CD4-positive, alpha-beta memory T cell (primary cell): ENCODE measurements at regions of chr9 and their contacts with region 1.

Region 1: DNA sequence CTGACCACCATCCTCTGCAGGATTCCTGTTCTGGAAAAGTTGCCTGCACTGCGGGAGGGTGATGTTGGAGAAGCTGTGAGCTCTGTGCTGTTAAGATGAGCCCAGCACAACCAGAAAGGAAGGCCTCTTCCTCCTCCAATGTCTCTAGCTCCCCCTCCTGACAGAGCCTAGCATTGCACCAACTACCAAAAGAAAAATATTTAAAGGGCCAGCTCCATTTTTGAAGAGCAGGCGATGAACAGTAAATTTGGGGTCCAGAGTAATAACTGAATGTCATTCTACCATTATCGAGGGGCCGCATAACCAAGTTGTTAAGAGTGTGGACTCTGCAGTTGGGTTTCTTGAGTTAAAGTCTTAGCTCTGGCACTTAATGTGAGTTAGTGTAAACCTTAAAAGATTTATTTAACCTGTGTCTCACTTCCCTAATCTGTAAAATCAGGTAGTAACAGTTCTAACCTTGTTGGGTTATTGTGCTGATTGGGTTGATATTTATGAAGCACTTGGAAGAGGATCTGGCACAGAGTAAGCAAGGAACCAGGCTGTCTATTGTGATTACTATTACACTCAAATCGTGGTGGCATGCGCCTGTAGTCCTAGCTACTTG is 3.9 kb downstream of the TEX53 start:
- DNase-seq: peak; percentile 77 to 86 (median 83)
- H3K4me3 ChIP-seq: no peak overlapping the region
- H3K4me3 Mint-ChIP-seq: no peak overlapping the region
- H3K27ac ChIP-seq: no peak overlapping the region
- H3K27ac Mint-ChIP-seq: peak overlapping the region in 4 of 7 donors; percentile 38 to 75 (median 64)
- H3K4me1 ChIP-seq: peaks cover 12% of the 10 kb centered on the region
- H3K4me1 Mint-ChIP-seq: peaks cover 7 to 18% (median 14%) of the 10 kb centered on the region in 4 donors
- H3K27me3 ChIP-seq: no peaks in the 10 kb centered on the region
- H3K27me3 Mint-ChIP-seq: no peaks in the 10 kb centered on the region

Region 2: GRCh38 chr9:114385412-114386181 is 268.1 kb before region 1 on chr9:
- CTCF ChIA-PET with region 1: interaction called, 33 read pairs
- POLR2A ChIA-PET with region 1: interaction called, 11 read pairs
- intact Hi-C with region 1: no loop called
- DNase-seq: peak; percentile 91 to 98 (median 93)
- H3K4me3 ChIP-seq: peak overlapping the region; percentile 78 to 99
- H3K4me3 Mint-ChIP-seq: peak overlapping the region; percentile 95 to 100 (median 97)
- H3K27ac ChIP-seq: peak overlapping the region; percentile 88
- H3K27ac Mint-ChIP-seq: peak overlapping the region; percentile 96 to 99 (median 97)
- H3K4me1 ChIP-seq: peaks cover 79% of the 10 kb centered on the region
- H3K4me1 Mint-ChIP-seq: peaks cover 44 to 91% (median 66%) of the 10 kb centered on the region in 4 donors
- H3K27me3 ChIP-seq: no peaks in the 10 kb centered on the region
- H3K27me3 Mint-ChIP-seq: no peaks in the 10 kb centered on the region

Region 3: DNA sequence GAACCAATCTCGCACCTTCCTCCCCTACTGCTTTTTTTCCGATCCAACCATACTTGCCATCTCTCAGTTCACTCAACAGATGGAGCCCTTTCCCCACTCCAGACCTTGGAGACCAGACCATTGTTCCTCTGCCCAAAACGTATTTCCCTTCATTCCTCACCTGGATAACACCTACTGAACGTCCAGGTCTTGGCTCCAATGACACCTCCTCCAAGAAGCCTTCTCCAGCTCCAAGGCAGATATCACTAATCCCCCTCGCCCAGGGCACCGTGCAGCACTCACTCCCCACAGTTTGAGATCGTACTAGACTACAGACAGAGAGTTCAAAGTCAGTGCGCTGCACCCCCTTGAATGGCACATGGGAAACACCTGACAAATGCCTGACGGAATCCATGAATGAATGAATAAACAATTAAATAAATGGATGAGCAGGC is 218.8 kb before region 1 on chr9:
- CTCF ChIA-PET with region 1: interaction called, 93 read pairs
- POLR2A ChIA-PET with region 1: interaction called, 4 read pairs
- intact Hi-C with region 1: loop called (anchors 1 kb)
- DNase-seq: peak in 3 of 5 donors; percentile 7 to 16 (median 15)
- H3K4me3 ChIP-seq: no peak overlapping the region
- H3K4me3 Mint-ChIP-seq: no peak overlapping the region
- H3K27ac ChIP-seq: no peak overlapping the region
- H3K27ac Mint-ChIP-seq: no peak overlapping the region
- H3K4me1 ChIP-seq: peaks cover 6% of the 10 kb centered on the region
- H3K4me1 Mint-ChIP-seq: peaks cover 0 to 4% (median 2%) of the 10 kb centered on the region in 4 donors
- H3K27me3 ChIP-seq: no peaks in the 10 kb centered on the region
- H3K27me3 Mint-ChIP-seq: no peaks in the 10 kb centered on the region

Region 4: GRCh38 chr9:114505187-114506081 is 148.2 kb before region 1 on chr9 and contains the start of gene WHRN:
- CTCF ChIA-PET with region 1: interaction called, 28 read pairs
- POLR2A ChIA-PET with region 1: interaction called, 4 read pairs
- intact Hi-C with region 1: loop called (anchors 1 kb)
- DNase-seq: peak; percentile 91 to 95 (median 93)
- H3K4me3 ChIP-seq: peak within 1 kb of the TSS; percentile 62 to 63
- H3K4me3 Mint-ChIP-seq: peak within 1 kb of the TSS; percentile 83 to 90 (median 87)
- H3K27ac ChIP-seq: peak within 1 kb of the TSS; percentile 47
- H3K27ac Mint-ChIP-seq: peak within 1 kb of the TSS; percentile 89 to 97 (median 93)
- H3K4me1 ChIP-seq: peaks cover 22% of the 10 kb centered on the region
- H3K4me1 Mint-ChIP-seq: peaks cover 10 to 45% (median 32%) of the 10 kb centered on the region in 4 donors
- H3K27me3 ChIP-seq: peaks cover 4% of the 10 kb centered on the region
- H3K27me3 Mint-ChIP-seq: peaks cover 16 to 17% of the 10 kb centered on the region in 2 donors
- total RNA-seq, gene WHRN: 8.4 to 10.1 TPM

Region 5: GRCh38 chr9:114538241-114538640 is 115.4 kb before region 1 on chr9:
- CTCF ChIA-PET with region 1: interaction called, 53 read pairs
- POLR2A ChIA-PET with region 1: interaction called, 4 read pairs
- intact Hi-C with region 1: loop called (anchors 1 kb)
- DNase-seq: peak in 4 of 5 donors; percentile 17 to 34 (median 21)
- H3K4me3 ChIP-seq: no peak overlapping the region
- H3K4me3 Mint-ChIP-seq: no peak overlapping the region
- H3K27ac ChIP-seq: no peak overlapping the region
- H3K27ac Mint-ChIP-seq: peak overlapping the region in 5 of 7 donors; percentile 8 to 37 (median 24)
- H3K4me1 ChIP-seq: no peaks in the 10 kb centered on the region
- H3K4me1 Mint-ChIP-seq: peaks cover 4 to 8% (median 5%) of the 10 kb centered on the region in 4 donors
- H3K27me3 ChIP-seq: no peaks in the 10 kb centered on the region
- H3K27me3 Mint-ChIP-seq: peaks cover 0 to 2% of the 10 kb centered on the region in 2 donors

Region 6: GRCh38 chr9:114611516-114612271 is 42.0 kb before region 1 on chr9:
- CTCF ChIA-PET with region 1: interaction called, 12 read pairs
- POLR2A ChIA-PET with region 1: interaction called, 4 read pairs
- intact Hi-C with region 1: loop called (anchors 5 kb)
- DNase-seq: peak in 4 of 5 donors; percentile 18 to 65 (median 26)
- H3K4me3 ChIP-seq: peak overlapping the region; percentile 77 to 92
- H3K4me3 Mint-ChIP-seq: peak overlapping the region; percentile 86 to 96 (median 93)
- H3K27ac ChIP-seq: peak overlapping the region; percentile 72
- H3K27ac Mint-ChIP-seq: peak overlapping the region; percentile 79 to 97 (median 94)
- H3K4me1 ChIP-seq: peaks cover 41% of the 10 kb centered on the region
- H3K4me1 Mint-ChIP-seq: peaks cover 24 to 49% (median 39%) of the 10 kb centered on the region in 4 donors
- H3K27me3 ChIP-seq: no peaks in the 10 kb centered on the region
- H3K27me3 Mint-ChIP-seq: no peaks in the 10 kb centered on the region

Region 7: GRCh38 chr9:114671605-114672004 is 17.9 kb after region 1 on chr9:
- CTCF ChIA-PET with region 1: interaction called, 10 read pairs
- POLR2A ChIA-PET with region 1: no interaction called
- intact Hi-C with region 1: no loop called
- DNase-seq: no peak
- H3K4me3 ChIP-seq: no peak overlapping the region
- H3K4me3 Mint-ChIP-seq: no peak overlapping the region
- H3K27ac ChIP-seq: no peak overlapping the region
- H3K27ac Mint-ChIP-seq: peak overlapping the region in 1 of 7 donors; percentile 12
- H3K4me1 ChIP-seq: no peaks in the 10 kb centered on the region
- H3K4me1 Mint-ChIP-seq: peaks cover 0 to 1% (median 0%) of the 10 kb centered on the region in 4 donors
- H3K27me3 ChIP-seq: no peaks in the 10 kb centered on the region
- H3K27me3 Mint-ChIP-seq: no peaks in the 10 kb centered on the region

Region 8: DNA sequence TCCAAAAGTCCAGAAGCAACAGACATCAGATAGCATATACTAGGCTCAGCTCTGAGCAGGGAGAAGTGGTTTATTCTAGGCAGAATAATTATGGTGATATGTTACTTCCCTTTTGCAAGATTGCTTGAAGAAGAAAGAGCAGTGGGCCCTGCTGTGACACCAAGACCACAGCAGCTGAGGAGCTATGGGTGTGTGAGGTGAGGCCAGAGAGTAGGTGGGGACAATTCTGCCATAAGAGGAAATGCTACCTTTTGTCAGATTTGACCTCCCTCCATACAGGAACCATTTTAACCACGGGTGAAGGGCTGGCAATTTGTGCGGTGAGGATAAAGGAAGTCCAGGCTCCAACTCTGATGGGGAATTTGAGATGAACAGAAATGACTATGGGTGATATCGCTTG is 100.9 kb after region 1 on chr9:
- CTCF ChIA-PET with region 1: no interaction called
- POLR2A ChIA-PET with region 1: no interaction called
- intact Hi-C with region 1: no loop called
- DNase-seq: no peak
- H3K4me3 ChIP-seq: no peak overlapping the region
- H3K4me3 Mint-ChIP-seq: no peak overlapping the region
- H3K27ac ChIP-seq: no peak overlapping the region
- H3K27ac Mint-ChIP-seq: peak overlapping the region in 4 of 7 donors; percentile 4 to 61 (median 26)
- H3K4me1 ChIP-seq: peaks cover 7% of the 10 kb centered on the region
- H3K4me1 Mint-ChIP-seq: peaks cover 6 to 15% (median 12%) of the 10 kb centered on the region in 4 donors
- H3K27me3 ChIP-seq: no peaks in the 10 kb centered on the region
- H3K27me3 Mint-ChIP-seq: no peaks in the 10 kb centered on the region

Region 9: GRCh38 chr9:114884787-114885452 is 231.3 kb after region 1 on chr9:
- CTCF ChIA-PET with region 1: no interaction called
- POLR2A ChIA-PET with region 1: no interaction called
- intact Hi-C with region 1: no loop called
- DNase-seq: no peak
- H3K4me3 ChIP-seq: no peak overlapping the region
- H3K4me3 Mint-ChIP-seq: no peak overlapping the region
- H3K27ac ChIP-seq: no peak overlapping the region
- H3K27ac Mint-ChIP-seq: no peak overlapping the region
- H3K4me1 ChIP-seq: peaks cover 21% of the 10 kb centered on the region
- H3K4me1 Mint-ChIP-seq: peaks cover 21 to 28% (median 22%) of the 10 kb centered on the region in 4 donors
- H3K27me3 ChIP-seq: no peaks in the 10 kb centered on the region
- H3K27me3 Mint-ChIP-seq: no peaks in the 10 kb centered on the region